HAP-1 (cell line): ENCODE measurements at regions of chr11 and their contacts with region 1.

Region 1: DNA sequence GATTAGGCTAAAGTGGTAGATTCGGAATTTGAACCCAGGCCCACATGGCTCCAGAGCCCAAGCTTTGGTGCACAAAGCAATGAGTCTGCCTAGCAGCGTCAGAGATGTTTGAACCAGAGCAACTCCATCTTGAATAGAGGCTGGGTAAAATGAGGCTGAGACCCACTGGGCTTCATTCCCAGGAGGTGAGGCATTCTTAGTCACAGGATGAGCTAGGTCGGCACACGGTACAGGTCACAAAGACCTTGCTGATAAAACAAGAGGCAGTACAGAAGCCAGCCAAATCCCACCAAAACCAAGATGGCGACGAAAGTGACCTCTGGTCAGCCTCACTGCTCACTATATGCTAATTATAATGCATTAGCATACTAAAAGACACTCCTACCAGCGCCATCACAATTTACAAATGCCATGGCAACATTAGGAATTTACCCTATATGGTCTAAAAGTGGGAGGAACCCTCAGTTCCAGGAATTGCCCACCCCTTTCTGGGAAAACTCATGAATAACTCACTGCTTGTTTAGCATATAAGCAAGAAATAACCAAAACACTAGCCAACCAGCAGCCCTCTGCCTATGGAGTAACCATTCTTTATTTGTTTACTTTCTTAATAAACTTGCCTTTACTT is 40.3 kb upstream of the DAGLA start:
- DNase-seq: no peak
- H3K4me3 ChIP-seq: no peak overlapping the region
- H3K4me1 ChIP-seq: no peaks in the 10 kb centered on the region
- H3K27me3 ChIP-seq: no peaks in the 10 kb centered on the region

Region 2: GRCh38 chr11:61446211-61446651 is 193.7 kb before region 1 on chr11:
- in situ Hi-C with region 1: loop called (anchors 10 kb)
- DNase-seq: peak; percentile 74 to 91
- H3K4me3 ChIP-seq: no peak overlapping the region
- H3K4me1 ChIP-seq: no peaks in the 10 kb centered on the region
- H3K27me3 ChIP-seq: no peaks in the 10 kb centered on the region